A549 (cell line): ENCODE measurements at regions of chr14 and their contacts with region 1.

Region 1: GRCh38 chr14:96275177-96276112 is 19.4 kb downstream of the BDKRB1 start:
- DNase-seq: peak; percentile 67 to 76
- ATAC-seq: peak; percentile 77 to 80
- H3K4me3 ChIP-seq: no peak overlapping the region
- H3K27ac ChIP-seq: peak overlapping the region; percentile 69 to 92
- H3K4me1 ChIP-seq: peaks cover 39% of the 10 kb centered on the region
- CTCF ChIP-seq: peak; percentile 98
- EP300 ChIP-seq: no peak
- POLR2A ChIP-seq: no peak
- RAD21 ChIP-seq: peak; percentile 99

Region 2: DNA sequence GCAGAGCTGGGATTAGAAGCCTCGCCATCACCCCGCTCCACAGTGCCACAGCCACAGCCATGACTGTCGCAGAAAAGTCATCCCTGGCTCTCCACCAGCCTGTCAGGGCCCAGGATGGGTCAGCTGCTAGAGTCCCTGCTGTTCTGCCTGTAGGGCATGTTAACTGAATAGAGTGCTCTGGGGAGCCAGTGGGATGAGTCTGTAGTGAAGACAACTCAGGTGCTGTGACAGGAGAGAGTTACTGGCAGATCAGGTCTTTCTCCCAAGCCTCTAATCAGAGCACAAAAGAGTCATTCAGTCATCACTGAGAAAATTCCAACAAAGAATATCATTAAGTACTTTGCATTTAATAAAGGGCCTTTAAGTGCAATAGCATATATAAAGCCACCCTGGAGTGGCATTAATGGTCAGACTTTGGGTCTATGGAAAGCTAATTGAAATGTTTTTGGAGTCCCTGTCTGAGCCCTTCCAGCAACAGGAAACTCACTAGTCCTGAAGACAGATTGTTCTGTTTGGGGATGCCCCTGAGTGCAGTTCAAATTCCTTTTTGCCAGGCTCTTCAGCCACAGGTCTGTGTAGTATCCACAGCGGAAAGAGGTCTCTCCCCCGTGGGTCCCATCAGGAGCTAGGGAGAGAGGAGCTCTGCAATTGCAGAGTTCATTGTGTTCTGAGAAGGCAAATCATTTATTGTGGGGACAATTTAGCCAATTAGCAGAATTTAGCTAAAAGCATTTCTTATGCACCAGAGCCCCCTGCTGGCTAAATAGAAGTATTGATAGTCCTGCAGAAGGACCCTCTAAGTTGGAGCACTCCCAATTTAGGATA is 281.5 kb before region 1 on chr14:
- CTCF ChIA-PET with region 1: interaction called, 42 read pairs
- POLR2A ChIA-PET with region 1: no interaction called
- DNase-seq: peak; percentile 41 to 52
- ATAC-seq: peak; percentile 50 to 79; a peak in 4 of 6 replicates
- H3K4me3 ChIP-seq: no peak overlapping the region
- H3K27ac ChIP-seq: no peak overlapping the region
- H3K4me1 ChIP-seq: no peaks in the 10 kb centered on the region
- CTCF ChIP-seq: peak; percentile 88
- EP300 ChIP-seq: no peak
- POLR2A ChIP-seq: no peak
- RAD21 ChIP-seq: peak; percentile 91

Region 3: GRCh38 chr14:96184737-96185136 is 90.7 kb before region 1 on chr14:
- CTCF ChIA-PET with region 1: interaction called, 11 read pairs
- POLR2A ChIA-PET with region 1: no interaction called
- DNase-seq: no peak
- ATAC-seq: no peak
- H3K4me3 ChIP-seq: no peak overlapping the region
- H3K27ac ChIP-seq: no peak overlapping the region
- H3K4me1 ChIP-seq: no peaks in the 10 kb centered on the region
- CTCF ChIP-seq: no peak
- EP300 ChIP-seq: no peak
- POLR2A ChIP-seq: no peak
- RAD21 ChIP-seq: no peak

Region 4: DNA sequence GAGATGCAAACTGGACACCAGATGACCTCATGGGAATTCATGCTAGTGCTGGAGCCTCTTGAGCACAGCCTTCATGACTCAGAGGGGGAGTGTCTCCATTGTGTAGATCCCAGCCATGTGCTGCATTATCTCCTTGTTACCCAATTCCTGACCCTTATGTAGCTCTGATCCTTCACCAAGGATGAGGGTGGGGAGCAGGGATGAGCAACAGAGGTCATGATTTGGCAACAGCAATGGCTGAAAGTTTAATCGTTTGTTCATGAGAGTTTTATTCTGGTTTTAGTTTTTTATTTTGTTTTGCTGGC is 29.0 kb before region 1 on chr14:
- CTCF ChIA-PET with region 1: interaction called, 66 read pairs
- POLR2A ChIA-PET with region 1: no interaction called
- DNase-seq: peak; percentile 82 to 91
- ATAC-seq: peak; percentile 93 to 96
- H3K4me3 ChIP-seq: no peak overlapping the region
- H3K27ac ChIP-seq: peak overlapping the region; percentile 76 to 91
- H3K4me1 ChIP-seq: peaks cover 44% of the 10 kb centered on the region
- CTCF ChIP-seq: no peak
- EP300 ChIP-seq: peak; percentile 42 to 63; a peak in 2 of 5 replicates
- POLR2A ChIP-seq: no peak
- RAD21 ChIP-seq: peak in 1 of 2 experiments; percentile 29; a peak in 2 of 5 replicates

Region 5: DNA sequence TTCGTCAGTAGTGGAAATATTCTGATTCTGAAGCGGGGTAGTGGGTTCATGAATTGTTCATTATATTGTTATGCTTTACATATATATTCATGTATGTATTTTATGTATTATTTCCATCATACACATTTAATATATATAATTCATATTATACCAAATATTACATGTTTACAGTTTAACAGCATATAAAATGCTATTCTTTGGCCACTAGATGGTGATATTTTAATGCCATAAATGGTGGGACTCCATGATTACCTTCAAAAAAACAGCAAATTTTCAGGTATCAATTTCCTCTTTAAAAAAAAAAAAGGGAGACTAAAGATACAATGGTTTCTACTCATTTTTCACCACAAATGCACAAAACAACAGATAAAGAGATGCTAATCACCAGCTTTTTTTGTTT is 21.6 kb after region 1 on chr14:
- CTCF ChIA-PET with region 1: interaction called, 13 read pairs
- POLR2A ChIA-PET with region 1: no interaction called
- DNase-seq: peak in 1 of 2 experiments; percentile 37
- ATAC-seq: peak in 1 of 2 experiments; percentile 71; a peak in 3 of 6 replicates
- H3K4me3 ChIP-seq: no peak overlapping the region
- H3K27ac ChIP-seq: no peak overlapping the region
- H3K4me1 ChIP-seq: 0 out of 3 replicates have a peak, but pooled peaks cover 3% of the 10 kb centered on the region
- CTCF ChIP-seq: peak; percentile 63; the same call in 2 of the 3 replicates
- EP300 ChIP-seq: no peak
- POLR2A ChIP-seq: no peak
- RAD21 ChIP-seq: peak; percentile 67 to 74

Region 6: GRCh38 chr14:96461950-96462683 is 186.7 kb after region 1 on chr14:
- CTCF ChIA-PET with region 1: no interaction called
- POLR2A ChIA-PET with region 1: no interaction called
- DNase-seq: no peak
- ATAC-seq: no peak
- H3K4me3 ChIP-seq: no peak overlapping the region
- H3K27ac ChIP-seq: no peak overlapping the region
- H3K4me1 ChIP-seq: no peaks in the 10 kb centered on the region
- CTCF ChIP-seq: no peak
- EP300 ChIP-seq: no peak
- POLR2A ChIP-seq: no peak
- RAD21 ChIP-seq: no peak